Caco-2 (cell line): ENCODE measurements at regions of chr3 and their contacts with region 1.

Region 1: DNA sequence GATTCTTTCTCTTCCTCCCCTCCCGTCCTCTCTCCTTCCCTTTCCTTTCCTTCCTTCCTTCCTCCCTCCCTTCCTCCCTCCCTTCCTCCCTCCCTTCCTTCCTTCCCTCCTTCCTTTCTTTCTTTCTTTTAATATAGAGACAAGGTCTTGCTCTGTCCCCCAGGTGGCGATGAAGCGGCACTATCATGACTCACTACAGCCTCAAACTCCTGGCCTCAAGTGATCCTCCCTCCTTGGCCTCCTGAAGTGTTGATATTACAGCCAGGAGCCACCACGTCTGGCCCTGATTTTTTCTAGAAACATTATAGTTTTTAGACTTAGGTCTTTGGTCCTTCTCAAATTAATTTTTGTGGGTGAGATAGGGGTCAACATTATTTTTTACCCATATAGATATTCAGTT is 15.5 kb downstream of the GRM2 start:
- DNase-seq: no peak
- H3K4me3 ChIP-seq: no peak overlapping the region
- H3K4me3 Mint-ChIP-seq: no peak overlapping the region
- H3K27ac Mint-ChIP-seq: no peak overlapping the region
- H3K4me1 ChIP-seq: no peaks in the 10 kb centered on the region
- H3K4me1 Mint-ChIP-seq: no peaks in the 10 kb centered on the region
- H3K27me3 ChIP-seq: no peaks in the 10 kb centered on the region
- H3K27me3 Mint-ChIP-seq: peaks cover 9% of the 10 kb centered on the region
- CTCF ChIP-seq: no peak

Region 2: DNA sequence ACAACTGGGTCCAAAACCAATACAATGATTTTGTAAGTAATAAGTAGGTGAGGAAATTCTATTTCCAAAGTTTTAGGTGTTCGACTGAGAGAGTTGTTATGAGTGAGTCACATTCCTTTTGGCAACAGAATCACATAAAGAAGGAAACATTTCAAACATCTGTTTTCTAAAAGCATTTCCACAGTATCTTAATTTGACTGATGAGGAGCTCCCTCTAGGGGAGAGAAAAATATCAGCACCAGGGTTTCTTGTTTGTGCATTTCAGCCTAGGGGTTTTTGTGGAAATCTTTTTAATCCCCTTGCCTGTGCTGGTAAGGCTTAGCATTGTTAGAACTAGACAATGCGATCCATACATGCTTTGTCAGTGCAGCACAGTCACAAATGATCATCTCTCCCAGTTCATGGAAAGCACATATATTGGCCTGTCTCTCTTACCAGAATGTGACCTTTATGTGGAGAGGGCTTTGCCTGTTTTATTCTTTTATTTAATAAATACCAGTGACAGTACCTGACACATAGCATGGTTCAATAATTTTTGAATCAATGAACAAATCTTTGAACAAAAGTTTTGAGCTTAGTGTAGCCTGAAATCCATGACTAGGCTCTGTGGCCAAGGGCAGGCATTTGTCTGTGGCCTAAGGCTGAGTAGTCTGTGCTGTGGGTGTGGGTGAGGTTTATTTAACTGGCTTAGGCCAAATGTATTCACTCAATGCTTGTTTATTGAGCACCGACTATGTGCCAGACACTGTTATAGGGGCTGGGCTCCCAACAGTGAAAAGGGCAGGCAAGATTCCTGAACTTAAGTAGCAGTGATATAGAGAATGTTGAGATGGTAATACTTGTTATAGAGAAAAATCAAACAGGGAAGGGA is 77.8 kb after region 1 on chr3:
- CTCF ChIA-PET with region 1: interaction called, 3 read pairs
- POLR2A ChIA-PET with region 1: no interaction called
- intact Hi-C with region 1: loop called (anchors 2 kb)
- DNase-seq: peak in 1 of 2 experiments; percentile 50
- H3K4me3 ChIP-seq: no peak overlapping the region
- H3K4me3 Mint-ChIP-seq: no peak overlapping the region
- H3K27ac Mint-ChIP-seq: no peak overlapping the region
- H3K4me1 ChIP-seq: no peaks in the 10 kb centered on the region
- H3K4me1 Mint-ChIP-seq: no peaks in the 10 kb centered on the region
- H3K27me3 ChIP-seq: no peaks in the 10 kb centered on the region
- H3K27me3 Mint-ChIP-seq: peaks cover 24% of the 10 kb centered on the region
- CTCF ChIP-seq: peak; percentile 58 to 76